ENCODE measurements at regions of chr2 and their contacts with region 1.

Region 1: GRCh38 chr2:74250189-74250631 is 51.8 kb downstream of the MTHFD2 start:
- DNase-seq: no peak
- H3K4me3 ChIP-seq: no peak overlapping the region
- H3K27me3 ChIP-seq: peaks cover 7% of the 10 kb centered on the region; the same call in 1 of the 2 replicates
- CTCF ChIP-seq: peak; percentile 81

Region 2: DNA sequence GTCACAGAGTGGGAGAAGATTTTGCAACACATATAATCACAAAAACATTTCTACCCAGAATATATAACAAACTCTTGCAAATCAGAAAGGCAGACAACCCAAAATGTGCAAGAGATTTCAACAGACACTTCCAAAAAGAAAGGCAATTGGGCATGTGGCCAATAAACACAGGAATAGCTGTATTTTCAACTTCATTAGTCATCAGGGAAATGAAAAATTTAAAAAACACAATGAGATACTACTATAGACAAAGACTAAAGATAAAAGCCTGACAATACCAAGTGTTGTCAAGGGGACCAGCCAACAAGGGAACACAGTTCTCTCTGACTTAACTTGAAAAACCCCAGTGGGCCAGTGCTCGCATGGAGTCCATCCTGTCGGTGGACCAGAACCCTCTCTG is 11.3 kb before region 1 on chr2:
- CTCF ChIA-PET with region 1: interaction called, 32 read pairs
- POLR2A ChIA-PET with region 1: no interaction called
- DNase-seq: no peak
- H3K4me3 ChIP-seq: no peak overlapping the region
- H3K27me3 ChIP-seq: no peaks in the 10 kb centered on the region
- CTCF ChIP-seq: no peak

Region 3: GRCh38 chr2:74261204-74261864 is 11.1 kb after region 1 on chr2:
- CTCF ChIA-PET with region 1: interaction called, 46 read pairs
- POLR2A ChIA-PET with region 1: no interaction called
- DNase-seq: no peak
- H3K4me3 ChIP-seq: no peak overlapping the region
- H3K27me3 ChIP-seq: peaks cover 11% of the 10 kb centered on the region
- CTCF ChIP-seq: peak; percentile 64

Region 4: DNA sequence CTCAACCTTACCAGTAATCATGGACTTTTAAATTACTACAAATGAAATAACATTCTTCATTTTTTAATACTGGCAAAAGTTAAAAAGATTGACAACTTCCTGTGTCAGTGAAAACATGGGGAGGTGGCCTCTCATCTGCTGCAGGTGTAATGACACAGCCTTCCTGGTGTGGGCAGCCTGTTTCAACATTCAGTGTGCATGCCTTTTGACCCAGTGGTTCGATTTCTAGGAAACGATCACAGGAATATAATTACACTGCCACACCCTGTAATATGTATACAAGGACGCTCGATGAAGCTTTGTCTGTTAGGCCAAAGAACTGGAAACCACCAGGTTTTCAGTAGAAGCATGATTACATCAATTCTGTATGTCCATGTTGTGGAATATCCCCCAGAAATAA is 16.9 kb after region 1 on chr2:
- CTCF ChIA-PET with region 1: interaction called, 46 read pairs
- POLR2A ChIA-PET with region 1: no interaction called
- DNase-seq: no peak
- H3K4me3 ChIP-seq: no peak overlapping the region
- H3K27me3 ChIP-seq: peaks cover 4% of the 10 kb centered on the region; the same call in 1 of the 2 replicates
- CTCF ChIP-seq: no peak